Activated naive CD4-positive, alpha-beta T cell treated with anti-CD3 and anti-CD28 coated beads for 36 hours (primary cell): ENCODE measurements at regions of chrX and their contacts with region 1.

Region 1: DNA sequence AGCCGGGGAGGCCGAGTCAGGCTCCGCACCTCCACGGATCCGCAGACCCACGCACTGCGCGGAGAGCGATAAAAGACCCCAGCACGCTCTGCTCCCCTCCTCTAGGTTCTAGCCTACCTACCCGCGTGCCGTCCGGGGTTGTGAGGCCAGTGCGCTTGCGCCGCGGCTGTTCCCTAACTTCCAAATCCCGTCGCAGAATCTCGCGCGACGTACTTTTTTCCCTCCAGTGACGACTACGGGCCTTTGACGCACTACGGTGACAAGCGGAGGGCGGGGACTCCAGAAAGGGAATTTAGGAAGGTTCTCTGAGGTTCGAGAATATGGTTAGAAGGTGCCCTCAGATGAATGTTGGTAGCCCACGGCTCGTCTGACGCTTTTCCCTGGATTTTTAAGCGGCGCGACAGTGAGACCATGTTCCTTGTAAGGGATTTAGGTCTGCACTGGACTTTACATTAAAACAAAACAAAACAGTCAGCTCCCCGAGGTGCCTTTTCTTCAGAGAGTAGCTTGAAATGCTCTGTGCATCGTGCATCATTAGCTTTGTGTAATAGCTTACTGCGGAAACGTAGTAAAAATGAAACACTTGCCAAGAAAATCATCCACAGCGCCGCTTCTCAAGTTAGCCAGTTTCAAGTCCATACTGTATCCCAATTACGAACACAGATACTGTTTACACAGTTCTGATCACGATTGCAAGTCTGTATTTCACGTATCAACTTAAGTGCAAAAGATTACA is at the start of gene NKRF:
- DNase-seq: peak; percentile 94
- H3K4me3 Mint-ChIP-seq: peak within 1 kb of the TSS; percentile 96
- H3K27ac Mint-ChIP-seq: peak within 1 kb of the TSS; percentile 93
- H3K4me1 Mint-ChIP-seq: peaks cover 39% of the 10 kb centered on the region
- H3K27me3 Mint-ChIP-seq: no peaks in the 10 kb centered on the region
- total RNA-seq, gene NKRF: 15.8 to 17.0 TPM

Region 2: DNA sequence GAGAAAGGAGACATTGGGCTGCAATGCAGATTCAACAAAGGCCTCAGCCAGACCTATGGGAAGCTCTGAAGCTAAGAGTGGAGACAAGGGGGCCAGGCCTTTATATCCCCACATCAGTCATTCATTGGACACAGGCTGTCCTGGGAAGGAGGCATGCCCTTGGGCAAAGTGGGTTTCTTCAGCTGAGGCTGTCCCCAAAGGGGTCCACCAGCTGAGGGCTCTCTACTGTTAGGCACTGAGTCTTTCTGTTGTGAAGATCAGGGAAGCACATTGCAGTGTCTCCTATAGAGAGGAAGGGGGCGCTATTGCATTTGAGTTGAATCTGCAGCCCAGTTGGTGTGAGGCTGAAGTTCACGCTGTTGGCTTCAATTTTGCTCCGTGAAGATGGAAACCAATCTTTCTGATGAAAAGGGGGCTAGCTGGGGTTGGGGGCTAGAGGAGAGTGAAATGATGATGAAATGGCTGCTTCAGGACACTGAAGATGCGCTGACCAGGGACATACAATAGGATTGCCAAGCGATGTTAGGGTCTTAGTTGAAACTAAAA is 90.2 kb before region 1 on chrX:
- CTCF ChIA-PET with region 1: no interaction called
- intact Hi-C with region 1: loop called (anchors 5 kb)
- DNase-seq: peak; percentile 45
- H3K4me3 Mint-ChIP-seq: no peak overlapping the region
- H3K27ac Mint-ChIP-seq: no peak overlapping the region
- H3K4me1 Mint-ChIP-seq: no peaks in the 10 kb centered on the region
- H3K27me3 Mint-ChIP-seq: no peaks in the 10 kb centered on the region

Region 3: GRCh38 chrX:119574394-119575266 is 31.8 kb before region 1 on chrX and contains the start of gene UBE2A:
- CTCF ChIA-PET with region 1: interaction called, 6 read pairs
- intact Hi-C with region 1: loop called (anchors 1 kb)
- DNase-seq: peak; percentile 89
- H3K4me3 Mint-ChIP-seq: peak within 1 kb of the TSS; percentile 91
- H3K27ac Mint-ChIP-seq: peak within 1 kb of the TSS; percentile 89
- H3K4me1 Mint-ChIP-seq: peaks cover 12% of the 10 kb centered on the region
- H3K27me3 Mint-ChIP-seq: no peaks in the 10 kb centered on the region
- total RNA-seq, gene UBE2A: 46.1 to 49.8 TPM

Region 4: DNA sequence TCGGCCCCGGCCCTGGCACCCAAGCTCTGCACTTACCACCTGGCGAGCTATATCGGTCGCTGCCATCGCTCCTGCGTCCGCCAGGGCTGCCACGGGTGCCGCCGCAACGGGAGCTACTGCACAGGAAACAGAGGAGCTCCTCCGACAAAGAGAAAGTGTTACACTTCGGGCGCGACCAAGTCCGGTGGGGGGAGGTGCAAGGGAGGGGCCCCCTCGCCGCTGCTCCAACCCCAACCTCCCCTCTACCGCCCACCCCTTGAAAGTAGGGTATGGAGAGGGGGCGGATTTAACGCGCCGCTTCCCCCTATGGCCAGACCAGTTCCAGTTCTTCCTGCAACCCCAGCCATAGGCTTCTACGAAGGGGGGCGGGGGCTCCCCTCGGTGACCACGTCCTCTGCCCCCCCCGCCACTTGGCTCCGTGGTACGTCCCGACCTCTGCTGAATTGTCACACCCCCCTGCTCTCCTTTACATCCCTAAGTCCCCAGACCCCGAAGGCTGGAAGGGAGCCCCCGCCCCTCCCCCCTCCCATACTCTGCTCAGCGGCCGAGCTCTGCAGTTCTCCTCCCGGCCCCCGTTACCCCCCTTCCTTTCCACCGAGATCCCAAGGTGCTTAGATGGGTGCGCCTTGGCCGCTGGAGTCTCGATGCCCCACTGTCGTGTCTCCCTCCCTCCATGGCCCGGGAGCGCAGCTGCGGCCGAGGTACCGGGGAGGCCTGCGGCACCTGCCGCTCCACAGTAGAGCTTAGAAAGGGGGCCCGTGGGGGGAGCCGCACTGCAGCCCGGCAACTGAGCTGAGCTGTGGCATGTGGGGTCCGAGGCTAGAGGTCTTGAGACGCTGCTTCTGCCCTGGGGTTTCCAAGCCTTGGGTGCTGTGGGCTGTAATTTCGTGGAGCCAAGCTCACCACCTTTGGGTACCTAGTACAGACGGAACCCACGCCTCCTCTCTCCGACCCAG is 86.9 kb after region 1 on chrX and contains the start of gene SEPTIN6:
- CTCF ChIA-PET with region 1: interaction called, 3 read pairs
- intact Hi-C with region 1: loop called (anchors 1 kb)
- DNase-seq: peak; percentile 86
- H3K4me3 Mint-ChIP-seq: peak within 1 kb of the TSS; percentile 95
- H3K27ac Mint-ChIP-seq: peak within 1 kb of the TSS; percentile 100
- H3K4me1 Mint-ChIP-seq: peaks cover 10% of the 10 kb centered on the region
- H3K27me3 Mint-ChIP-seq: no peaks in the 10 kb centered on the region
- total RNA-seq, gene SEPTIN6: 137 to 143 TPM

Region 5: GRCh38 chrX:119852382-119853353 is 246.2 kb after region 1 on chrX and contains the start of gene UPF3B:
- CTCF ChIA-PET with region 1: no interaction called
- intact Hi-C with region 1: loop called (anchors 5 kb)
- DNase-seq: peak; percentile 97
- H3K4me3 Mint-ChIP-seq: peak within 1 kb of the TSS; percentile 98
- H3K27ac Mint-ChIP-seq: peak within 1 kb of the TSS; percentile 97
- H3K4me1 Mint-ChIP-seq: peaks cover 8% of the 10 kb centered on the region
- H3K27me3 Mint-ChIP-seq: no peaks in the 10 kb centered on the region
- total RNA-seq, gene UPF3B: 21.5 to 22.2 TPM